ENCODE measurements at regions of chr4 and their contacts with region 1.

Region 1: DNA sequence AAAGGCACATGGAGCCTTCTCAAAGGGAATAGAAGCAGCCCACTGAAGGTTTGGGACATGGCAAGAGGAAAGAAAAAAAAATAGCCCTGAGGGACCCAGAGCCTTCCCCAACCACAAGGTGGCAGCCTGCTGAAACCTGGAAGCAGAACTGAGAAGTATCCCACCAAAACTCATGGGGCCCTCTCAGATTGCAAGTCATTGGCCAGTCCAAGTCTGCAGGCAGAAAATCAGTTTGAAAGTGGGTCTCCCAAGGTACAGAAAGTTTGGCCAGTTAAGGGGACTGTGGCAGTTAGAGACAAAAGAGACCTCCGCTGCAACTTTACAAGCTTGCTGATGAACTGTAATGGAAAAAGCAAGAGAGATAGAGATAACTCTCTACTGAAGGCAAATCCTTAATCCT is 155.8 kb downstream of the ANTXR2 start:
- DNase-seq: peak; percentile 83
- H3K4me3 Mint-ChIP-seq: no peak overlapping the region
- H3K27ac Mint-ChIP-seq: no peak overlapping the region
- H3K4me1 Mint-ChIP-seq: peaks cover 12% of the 10 kb centered on the region
- H3K27me3 Mint-ChIP-seq: no peaks in the 10 kb centered on the region

Region 2: GRCh38 chr4:79982601-79983322 is 65.5 kb after region 1 on chr4:
- intact Hi-C with region 1: no loop called
- DNase-seq: no peak
- H3K4me3 Mint-ChIP-seq: no peak overlapping the region
- H3K27ac Mint-ChIP-seq: no peak overlapping the region
- H3K4me1 Mint-ChIP-seq: peaks cover 1% of the 10 kb centered on the region
- H3K27me3 Mint-ChIP-seq: no peaks in the 10 kb centered on the region

Region 3: GRCh38 chr4:80215449-80216052 is 298.3 kb after region 1 on chr4:
- intact Hi-C with region 1: loop called (anchors 1 kb)
- DNase-seq: no peak
- H3K4me3 Mint-ChIP-seq: no peak overlapping the region
- H3K27ac Mint-ChIP-seq: no peak overlapping the region
- H3K4me1 Mint-ChIP-seq: peaks cover 2% of the 10 kb centered on the region
- H3K27me3 Mint-ChIP-seq: peaks cover 53% of the 10 kb centered on the region